ENCODE measurements at regions of chr3 and their contacts with region 1.

Region 1: DNA sequence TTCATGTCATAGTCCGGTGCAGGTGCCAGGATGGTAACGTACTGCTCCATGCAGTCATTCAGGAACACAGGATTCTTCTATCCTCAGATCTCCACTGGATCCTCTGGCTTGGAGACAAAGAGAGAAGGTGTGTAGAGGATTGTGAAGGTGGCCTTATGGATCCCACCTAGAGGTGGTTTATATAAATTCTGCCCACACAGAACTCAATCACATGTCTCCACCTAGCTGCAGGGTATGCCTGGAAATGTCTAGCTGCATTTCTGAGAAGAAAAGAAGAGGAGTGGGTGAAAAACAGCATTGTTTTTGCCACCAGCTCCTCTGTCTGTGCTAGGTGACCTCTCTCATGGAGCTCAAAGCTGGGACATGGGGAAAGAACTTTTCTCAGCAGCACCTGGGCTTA is 478.7 kb downstream of the PDCD6IP start:
- DNase-seq: no peak

Region 2: DNA sequence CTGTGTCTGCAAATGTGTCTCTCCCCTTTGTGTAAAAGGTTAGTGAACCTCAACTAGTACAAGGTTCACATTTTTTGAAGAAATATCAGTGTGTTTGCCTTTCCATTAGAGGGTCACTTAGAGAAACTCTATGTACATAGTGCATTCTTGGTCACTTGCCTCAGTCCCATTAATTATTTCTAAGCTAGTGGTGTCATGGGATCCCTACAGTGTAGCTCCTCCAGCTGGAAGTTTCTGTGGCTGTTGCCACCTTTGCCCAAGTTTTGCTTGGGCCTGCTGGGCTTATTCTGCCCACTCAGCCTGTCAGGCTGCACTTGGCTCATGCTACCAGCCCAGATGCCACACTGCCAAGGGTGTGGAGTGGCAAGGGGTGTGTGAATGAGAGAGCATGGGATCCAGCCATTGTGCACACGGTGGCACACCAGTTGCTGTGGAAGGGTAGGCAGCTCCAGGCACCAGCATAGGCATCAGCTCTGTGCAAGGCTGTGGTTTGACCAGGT is 1523.9 kb after region 1 on chr3:
- intact Hi-C with region 1: loop called in 1 of 2 experiments (anchors 5 kb)
- DNase-seq: no peak